Activated CD4-positive, alpha-beta memory T cell treated with anti-CD3 and anti-CD28 coated beads, Interleukin-2, amount 10 ng/mL, durations not matched to agents 7 days and 5 days (primary cell): ENCODE measurements at regions of chr14 and their contacts with region 1.

Region 1: GRCh38 chr14:100155042-100155846 is 4.2 kb downstream of the DEGS2 start:
- DNase-seq: peak; percentile 44
- H3K4me3 Mint-ChIP-seq: no peak overlapping the region
- H3K27ac Mint-ChIP-seq: no peak overlapping the region
- H3K4me1 Mint-ChIP-seq: peaks cover 3% of the 10 kb centered on the region
- H3K27me3 Mint-ChIP-seq: peaks cover 22% of the 10 kb centered on the region

Region 2: GRCh38 chr14:100140452-100141078 is 14.7 kb before region 1 on chr14:
- CTCF ChIA-PET with region 1: interaction called, 11 read pairs
- POLR2A ChIA-PET with region 1: interaction called, 3 read pairs
- DNase-seq: no peak
- H3K4me3 Mint-ChIP-seq: no peak overlapping the region
- H3K27ac Mint-ChIP-seq: peak overlapping the region; percentile 24
- H3K4me1 Mint-ChIP-seq: no peaks in the 10 kb centered on the region
- H3K27me3 Mint-ChIP-seq: no peaks in the 10 kb centered on the region

Region 3: GRCh38 chr14:100375963-100376735 is 220.9 kb after region 1 on chr14:
- CTCF ChIA-PET with region 1: no interaction called
- POLR2A ChIA-PET with region 1: no interaction called
- DNase-seq: peak; percentile 95
- H3K4me3 Mint-ChIP-seq: peak within 1 kb of the TSS; percentile 96
- H3K27ac Mint-ChIP-seq: peak within 1 kb of the TSS; percentile 99
- H3K4me1 Mint-ChIP-seq: peaks cover 49% of the 10 kb centered on the region
- H3K27me3 Mint-ChIP-seq: no peaks in the 10 kb centered on the region